Aorta (tissue), 5 donors: ENCODE measurements at regions of chr6 and their contacts with region 1.

Region 1: DNA sequence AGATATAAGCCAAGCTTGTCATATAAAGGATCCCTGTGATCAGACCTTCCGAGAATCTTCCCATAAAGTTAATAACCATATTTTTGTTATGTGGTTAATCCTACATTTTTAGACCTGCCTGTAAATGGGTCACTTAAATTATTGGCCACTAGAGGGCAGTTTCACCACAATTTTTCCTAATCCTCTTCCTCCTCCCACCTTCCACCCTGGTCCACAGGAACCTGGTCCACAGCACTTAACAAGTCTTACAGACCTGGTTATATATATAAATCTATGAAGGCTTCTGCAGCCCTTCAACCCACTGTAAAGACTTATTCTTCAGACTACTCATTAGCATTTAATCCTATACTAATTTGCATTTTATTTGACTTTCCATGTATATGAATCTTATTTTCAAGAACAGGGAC is 28.3 kb downstream of the MRS2 start:
- DNase-seq: no peak
- ATAC-seq: peak; percentile 75
- H3K4me3 ChIP-seq: no peak overlapping the region
- H3K27ac ChIP-seq: no peak overlapping the region
- H3K4me1 ChIP-seq: no peaks in the 10 kb centered on the region
- H3K27me3 ChIP-seq: no peaks in the 10 kb centered on the region

Region 2: DNA sequence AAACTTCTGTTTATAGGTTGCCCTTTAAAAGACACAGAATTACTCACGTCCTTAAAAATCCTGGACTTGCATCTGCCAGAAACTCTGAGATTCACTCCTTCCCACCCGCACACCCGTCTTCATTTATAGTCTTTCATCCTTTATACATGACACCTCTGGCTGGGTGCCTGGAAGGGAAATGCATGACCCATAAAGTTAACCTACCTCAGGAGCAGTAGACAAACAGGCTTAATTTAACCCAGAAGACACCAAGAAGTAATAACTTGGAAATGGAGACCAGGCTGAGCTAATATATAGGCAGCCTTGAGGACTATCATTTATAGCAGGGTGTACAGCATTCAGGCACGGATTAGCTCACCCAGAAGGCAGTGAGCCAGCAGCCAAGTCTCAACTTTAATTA is 734.1 kb before region 1 on chr6:
- intact Hi-C with region 1: no loop called
- DNase-seq: no peak
- ATAC-seq: no peak
- H3K4me3 ChIP-seq: no peak overlapping the region
- H3K27ac ChIP-seq: no peak overlapping the region
- H3K4me1 ChIP-seq: no peaks in the 10 kb centered on the region
- H3K27me3 ChIP-seq: no peaks in the 10 kb centered on the region

Region 3: GRCh38 chr6:24402697-24403501 is 28.1 kb before region 1 on chr6 and contains the start of gene MRS2:
- intact Hi-C with region 1: no loop called
- DNase-seq: peak; percentile 87 to 90
- ATAC-seq: peak; percentile 94
- H3K4me3 ChIP-seq: peak within 1 kb of the TSS; percentile 51 to 68
- H3K27ac ChIP-seq: peak within 1 kb of the TSS in 1 of 2 donors; percentile 19
- H3K4me1 ChIP-seq: peaks cover 0 to 3% of the 10 kb centered on the region in 2 donors
- H3K27me3 ChIP-seq: no peaks in the 10 kb centered on the region
- total RNA-seq, gene MRS2: 12.1 to 19.8 TPM

Region 4: DNA sequence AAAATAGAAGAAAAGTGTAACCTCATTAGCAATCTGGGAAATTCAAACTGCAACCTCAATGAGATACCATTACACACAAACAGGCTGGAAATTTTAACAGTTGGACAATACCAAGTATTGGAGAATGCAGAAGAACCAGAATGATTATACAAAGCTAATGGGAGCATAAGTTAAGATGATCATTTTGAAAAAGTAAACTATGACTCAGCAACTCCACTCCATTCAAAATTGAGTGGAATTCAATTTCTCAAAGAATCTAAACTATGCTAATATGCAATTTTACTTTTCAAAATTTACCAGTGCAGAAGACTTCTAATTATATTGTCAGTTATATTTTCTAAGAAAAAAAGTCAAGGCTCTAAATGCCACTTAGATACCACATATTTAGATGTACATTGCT is 41.1 kb after region 1 on chr6:
- intact Hi-C with region 1: no loop called
- DNase-seq: no peak
- ATAC-seq: no peak
- H3K4me3 ChIP-seq: no peak overlapping the region
- H3K27ac ChIP-seq: no peak overlapping the region
- H3K4me1 ChIP-seq: peaks cover 0 to 3% of the 10 kb centered on the region in 2 donors
- H3K27me3 ChIP-seq: no peaks in the 10 kb centered on the region

Region 5: GRCh38 chr6:24494821-24495795 is 64.1 kb after region 1 on chr6 and contains the start of gene ALDH5A1:
- intact Hi-C with region 1: loop called in 1 of 2 experiments (anchors 10 kb)
- DNase-seq: peak; percentile 83 to 91
- ATAC-seq: peak; percentile 88
- H3K4me3 ChIP-seq: peak within 1 kb of the TSS; percentile 71 to 74
- H3K27ac ChIP-seq: peak within 1 kb of the TSS in 1 of 2 donors; percentile 60
- H3K4me1 ChIP-seq: no peaks in the 10 kb centered on the region
- H3K27me3 ChIP-seq: no peaks in the 10 kb centered on the region
- total RNA-seq, gene ALDH5A1: 5.1 to 8.2 TPM

Region 6: DNA sequence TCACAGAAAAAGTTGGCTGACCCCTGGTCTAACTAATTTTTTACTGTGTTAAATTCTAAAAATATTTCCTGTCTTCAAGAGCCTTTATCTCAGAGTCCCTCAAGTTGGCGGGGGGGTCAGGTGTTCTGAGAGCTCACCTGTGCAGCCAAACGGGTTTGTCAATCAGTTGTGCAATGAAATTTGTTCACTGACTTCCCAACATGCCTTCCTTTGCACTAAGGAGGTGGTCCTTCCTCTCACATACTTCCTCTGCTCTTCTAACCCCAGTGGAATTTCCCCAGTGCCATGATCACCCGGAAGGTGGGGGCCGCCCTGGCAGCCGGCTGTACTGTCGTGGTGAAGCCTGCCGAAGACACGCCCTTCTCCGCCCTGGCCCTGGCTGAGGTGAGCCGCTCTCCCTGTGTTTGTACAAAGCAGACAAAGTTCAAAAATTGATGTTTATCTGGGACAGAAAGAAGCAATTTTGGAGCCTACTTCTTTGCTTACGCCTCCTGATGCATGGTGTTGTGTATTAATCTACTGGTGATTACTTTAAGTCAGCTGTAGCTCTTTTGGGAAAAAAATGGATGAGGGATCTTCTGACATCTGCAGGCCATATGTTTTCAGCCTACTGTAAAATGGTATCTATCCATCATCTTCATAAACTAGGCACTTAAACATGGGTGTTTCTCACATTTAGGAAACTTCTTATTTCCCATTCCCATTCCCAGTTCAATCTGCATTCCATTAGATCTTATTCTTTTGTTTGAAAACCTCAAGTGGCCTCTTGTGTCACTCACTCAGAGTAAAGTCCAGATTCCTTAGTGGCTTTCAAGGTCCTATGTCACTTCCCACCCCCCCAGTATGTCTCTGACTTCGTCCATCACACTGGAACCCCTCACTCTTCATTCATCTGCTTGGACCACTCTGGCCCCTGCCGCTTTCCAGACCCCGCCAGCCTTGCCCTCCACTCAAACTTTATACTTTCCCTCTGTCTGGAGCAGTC is 73.8 kb after region 1 on chr6:
- intact Hi-C with region 1: loop called in 1 of 2 experiments (anchors 5 kb)
- DNase-seq: no peak
- ATAC-seq: no peak
- H3K4me3 ChIP-seq: no peak overlapping the region
- H3K27ac ChIP-seq: no peak overlapping the region
- H3K4me1 ChIP-seq: no peaks in the 10 kb centered on the region
- H3K27me3 ChIP-seq: no peaks in the 10 kb centered on the region

Region 7: GRCh38 chr6:24520929-24521546 is 90.0 kb after region 1 on chr6:
- intact Hi-C with region 1: loop called (anchors 2 to 5 kb)
- DNase-seq: peak; percentile 68 to 84
- ATAC-seq: peak; percentile 75
- H3K4me3 ChIP-seq: no peak overlapping the region
- H3K27ac ChIP-seq: no peak overlapping the region
- H3K4me1 ChIP-seq: no peaks in the 10 kb centered on the region
- H3K27me3 ChIP-seq: no peaks in the 10 kb centered on the region

Region 8: DNA sequence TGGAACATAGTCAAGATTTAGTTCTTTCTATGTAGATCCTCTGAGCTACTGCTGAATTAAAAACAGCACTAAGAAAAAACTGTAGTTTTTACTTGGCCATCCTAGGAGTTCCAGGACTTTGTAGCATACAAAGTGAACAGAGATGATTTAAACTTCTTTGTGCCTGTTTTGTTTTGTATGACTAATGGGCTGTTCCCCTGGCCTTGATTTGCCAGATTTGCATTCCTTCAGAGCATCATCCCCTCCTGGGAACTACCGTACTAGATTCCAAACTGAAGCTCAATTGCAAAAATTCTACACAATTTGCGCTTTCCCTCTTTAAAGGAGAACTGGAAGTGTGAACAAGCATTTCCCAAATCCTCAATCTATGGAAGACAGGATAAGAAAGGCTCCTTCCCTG is 258.9 kb after region 1 on chr6:
- intact Hi-C with region 1: loop called in 1 of 2 experiments (anchors 10 kb)
- DNase-seq: no peak
- ATAC-seq: no peak
- H3K4me3 ChIP-seq: no peak overlapping the region
- H3K27ac ChIP-seq: no peak overlapping the region
- H3K4me1 ChIP-seq: no peaks in the 10 kb centered on the region
- H3K27me3 ChIP-seq: no peaks in the 10 kb centered on the region